ENCODE measurements at regions of chr16 and their contacts with region 1.

Region 1: DNA sequence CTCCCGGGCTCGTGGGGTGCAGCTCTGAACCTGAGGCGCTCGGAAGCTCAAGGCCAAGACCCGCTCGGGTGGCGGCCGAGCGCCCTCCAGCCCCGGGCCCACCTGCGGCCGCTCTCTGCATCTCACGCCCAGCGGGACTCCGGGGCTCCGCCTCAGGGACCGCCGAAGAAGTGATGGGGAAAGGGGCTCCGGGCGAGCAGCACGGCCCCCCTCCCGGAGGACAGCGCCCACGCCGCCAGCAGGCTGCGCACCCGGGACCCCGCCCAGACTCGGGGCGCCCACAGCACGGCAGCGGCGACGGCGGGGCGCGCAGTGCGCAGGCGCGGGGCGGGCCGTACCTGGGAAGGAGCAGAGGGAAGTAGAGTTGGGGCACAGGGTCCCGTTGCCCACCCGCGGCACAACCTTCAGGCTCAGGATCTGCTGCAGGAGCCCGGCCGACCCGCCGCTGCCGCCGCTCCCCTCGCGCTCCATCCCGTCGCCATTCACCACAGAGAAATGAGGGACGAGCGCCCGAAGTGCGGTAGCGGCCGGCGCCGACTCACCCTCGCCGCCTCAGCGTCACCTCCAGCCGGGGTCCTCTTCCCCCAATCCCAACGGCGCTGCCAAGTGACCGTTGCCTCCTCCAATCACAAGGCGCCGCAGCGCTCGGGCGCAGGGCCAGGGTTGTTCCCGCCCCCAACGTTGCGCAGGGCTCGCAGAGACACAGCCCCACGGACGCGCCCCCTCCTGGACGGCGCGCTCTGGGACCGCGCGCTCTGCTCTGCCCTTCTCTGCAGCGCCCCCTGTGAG is at the start of gene TMEM170A:
- DNase-seq: peak; percentile 100
- H3K4me3 Mint-ChIP-seq: peak within 1 kb of the TSS; percentile 89
- H3K27ac Mint-ChIP-seq: peak within 1 kb of the TSS; percentile 95
- H3K4me1 Mint-ChIP-seq: peaks cover 38% of the 10 kb centered on the region
- H3K27me3 Mint-ChIP-seq: peaks cover 2% of the 10 kb centered on the region
- total RNA-seq, gene TMEM170A: 39.1 and 46.0 TPM in 2 replicates

Region 2: GRCh38 chr16:75198135-75198600 is 266.2 kb before region 1 on chr16:
- intact Hi-C with region 1: loop called (anchors 2 kb)
- DNase-seq: no peak
- H3K4me3 Mint-ChIP-seq: no peak overlapping the region
- H3K27ac Mint-ChIP-seq: no peak overlapping the region
- H3K4me1 Mint-ChIP-seq: peaks cover 16% of the 10 kb centered on the region
- H3K27me3 Mint-ChIP-seq: peaks cover 30% of the 10 kb centered on the region

Region 3: DNA sequence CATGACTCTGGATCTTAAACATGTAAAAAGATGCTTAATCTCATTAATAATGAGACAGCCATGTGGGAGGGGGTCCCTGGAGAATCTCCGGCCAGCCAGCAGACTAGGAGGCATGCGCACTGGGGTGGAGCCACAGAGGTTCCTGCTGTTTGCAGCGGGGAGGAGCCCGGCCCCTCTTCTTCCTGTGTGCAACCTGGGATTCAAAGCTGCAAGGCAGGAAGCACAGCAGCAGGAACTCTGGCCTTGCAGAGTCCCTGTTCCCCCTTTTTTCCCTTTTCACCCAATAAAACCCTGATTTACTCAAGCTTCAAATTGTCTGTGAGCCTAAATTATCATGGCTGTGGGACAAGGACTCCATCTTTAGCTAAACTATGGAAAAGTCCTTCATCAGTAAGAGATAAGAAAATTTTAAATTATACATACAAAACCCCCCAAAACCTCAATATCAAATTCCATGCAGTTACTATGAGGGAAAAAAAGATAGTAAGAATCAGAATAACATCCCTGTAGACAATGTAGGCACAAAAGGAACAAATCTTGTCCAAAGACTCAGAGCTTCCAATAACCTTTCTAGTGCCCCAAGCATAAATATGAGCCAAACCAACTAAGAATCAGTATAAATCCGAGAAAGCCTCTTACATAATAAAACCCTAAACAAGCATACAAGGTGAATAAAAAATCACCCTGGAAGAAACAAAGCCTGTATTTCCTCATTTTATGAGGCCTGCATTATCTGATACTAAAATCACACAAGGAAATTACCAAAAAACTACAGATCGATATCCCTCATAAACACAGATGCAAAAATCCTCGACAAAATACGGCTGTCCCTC is 43.1 kb before region 1 on chr16:
- intact Hi-C with region 1: loop called (anchors 5 kb)
- DNase-seq: peak; percentile 76
- H3K4me3 Mint-ChIP-seq: peak overlapping the region; percentile 67
- H3K27ac Mint-ChIP-seq: peak overlapping the region; percentile 2
- H3K4me1 Mint-ChIP-seq: peaks cover 15% of the 10 kb centered on the region
- H3K27me3 Mint-ChIP-seq: no peaks in the 10 kb centered on the region

Region 4: DNA sequence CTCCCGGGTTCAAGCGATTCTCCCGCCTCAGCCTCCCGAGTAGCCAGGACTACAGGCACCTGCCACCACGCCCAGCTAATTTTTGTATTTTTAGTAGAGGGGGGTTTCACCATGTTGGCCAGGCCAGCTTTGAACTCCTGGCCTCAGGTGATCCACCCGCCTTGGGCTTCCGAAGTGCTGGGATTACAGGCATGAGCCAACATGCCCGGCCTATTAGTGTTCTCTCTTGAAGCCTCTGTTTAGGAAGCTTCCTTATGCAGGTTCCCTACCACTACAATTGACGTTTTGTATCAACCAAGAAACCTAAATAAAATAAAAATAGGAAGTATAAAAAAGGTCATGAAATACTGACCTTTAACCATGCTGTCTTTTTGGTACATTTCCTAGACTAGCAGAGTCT is 55.6 kb after region 1 on chr16:
- intact Hi-C with region 1: loop called (anchors 1 kb)
- DNase-seq: no peak
- H3K4me3 Mint-ChIP-seq: no peak overlapping the region
- H3K27ac Mint-ChIP-seq: no peak overlapping the region
- H3K4me1 Mint-ChIP-seq: peaks cover 10% of the 10 kb centered on the region
- H3K27me3 Mint-ChIP-seq: peaks cover 7% of the 10 kb centered on the region

Region 5: DNA sequence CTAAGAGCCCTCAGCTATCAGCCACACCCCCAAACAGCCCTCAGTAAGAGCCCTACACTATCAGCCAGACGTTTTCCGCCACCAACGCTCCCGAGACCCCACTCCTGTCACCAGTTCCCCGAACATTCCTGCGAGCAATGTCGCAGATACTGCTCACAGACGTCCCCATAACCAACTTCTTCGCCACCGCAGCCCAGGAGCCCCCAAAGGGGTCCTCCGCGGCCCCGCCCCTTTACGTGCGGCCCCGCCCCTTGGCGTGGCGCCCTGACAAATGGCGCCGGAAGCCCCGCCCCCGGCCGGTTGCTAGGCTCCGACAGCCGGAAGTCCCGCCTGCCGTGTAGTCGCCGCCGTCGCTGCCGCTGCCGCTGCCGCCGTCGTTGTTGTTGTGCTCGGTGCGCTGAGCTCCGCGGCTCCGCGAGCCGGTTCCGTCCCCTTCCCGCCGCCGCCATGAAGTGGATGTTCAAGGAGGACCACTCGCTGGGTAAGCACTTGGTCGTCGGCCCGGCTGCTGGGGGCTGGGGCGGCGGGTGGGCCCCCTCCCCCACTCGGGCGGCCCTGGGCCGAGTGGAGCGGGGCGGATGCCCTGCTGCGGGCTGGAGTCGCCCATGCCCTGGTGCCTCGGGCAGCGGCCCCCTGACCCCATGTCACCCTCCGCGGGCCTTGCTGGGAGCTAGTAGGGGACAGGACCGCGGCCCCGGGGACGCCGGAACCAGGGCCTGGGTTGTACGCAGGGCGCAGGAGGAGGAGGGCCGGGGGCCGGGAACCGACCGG is 101.9 kb after region 1 on chr16 and contains the start of gene GABARAPL2:
- intact Hi-C with region 1: loop called (anchors 1 kb)
- DNase-seq: peak; percentile 98
- H3K4me3 Mint-ChIP-seq: peak within 1 kb of the TSS; percentile 90
- H3K27ac Mint-ChIP-seq: peak within 1 kb of the TSS; percentile 87
- H3K4me1 Mint-ChIP-seq: peaks cover 28% of the 10 kb centered on the region
- H3K27me3 Mint-ChIP-seq: peaks cover 14% of the 10 kb centered on the region
- total RNA-seq, gene GABARAPL2: 69.9 and 70.4 TPM in 2 replicates

Region 6: GRCh38 chr16:76729525-76729924 is 1265.2 kb after region 1 on chr16:
- intact Hi-C with region 1: no loop called
- DNase-seq: no peak
- H3K4me3 Mint-ChIP-seq: no peak overlapping the region
- H3K27ac Mint-ChIP-seq: no peak overlapping the region
- H3K4me1 Mint-ChIP-seq: no peaks in the 10 kb centered on the region
- H3K27me3 Mint-ChIP-seq: no peaks in the 10 kb centered on the region

Region 7: DNA sequence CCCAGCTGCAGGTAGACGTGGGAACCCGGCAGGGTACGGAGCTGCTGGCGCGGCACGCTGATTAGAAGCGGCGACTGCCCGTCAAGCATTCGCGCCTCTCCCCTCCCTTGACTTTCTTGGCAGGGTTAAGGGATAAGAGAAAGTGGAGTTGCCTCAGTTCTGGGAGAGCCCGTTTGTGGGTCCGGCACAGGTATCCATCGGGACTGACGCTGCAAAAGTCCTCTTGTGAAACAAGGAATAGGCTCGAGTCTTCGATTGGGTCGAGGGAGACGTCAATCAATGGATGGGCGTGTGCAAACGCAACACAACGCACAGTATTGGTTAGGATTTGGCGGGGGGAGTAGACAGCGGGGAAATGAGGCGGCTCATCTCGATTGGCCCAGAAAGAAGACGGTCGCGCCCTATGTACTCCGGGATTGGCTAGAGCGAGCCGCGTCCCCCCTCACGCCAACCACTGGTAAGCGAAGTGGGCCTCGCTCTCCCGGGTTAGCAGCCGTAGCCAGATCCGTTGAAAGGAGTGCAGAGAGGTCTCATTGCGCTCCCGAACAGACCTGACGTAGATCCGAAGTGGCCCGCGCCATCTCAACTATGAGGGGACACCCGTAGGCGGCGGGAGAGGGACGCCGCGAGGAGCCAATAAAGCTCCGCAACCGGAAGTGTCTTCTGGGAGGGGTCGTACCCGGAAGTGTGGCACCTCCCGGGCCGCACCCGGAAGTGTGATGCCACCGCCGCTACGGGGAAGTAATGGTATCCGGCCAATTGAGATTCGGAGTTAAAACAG is 1726.3 kb after region 1 on chr16 and contains the start of gene MON1B:
- intact Hi-C with region 1: loop called (anchors 1 kb)
- DNase-seq: peak; percentile 98
- H3K4me3 Mint-ChIP-seq: peak within 1 kb of the TSS; percentile 97
- H3K27ac Mint-ChIP-seq: peak within 1 kb of the TSS; percentile 99
- H3K4me1 Mint-ChIP-seq: peaks cover 36% of the 10 kb centered on the region
- H3K27me3 Mint-ChIP-seq: peaks cover 10% of the 10 kb centered on the region
- total RNA-seq, gene MON1B: 65.7 and 69.3 TPM in 2 replicates